ENCODE measurements at regions of chr10 and their contacts with region 1.

Region 1: GRCh38 chr10:6275022-6275997 is 72.6 kb downstream of the PFKFB3 start:
- DNase-seq: peak; percentile 98
- H3K4me3 Mint-ChIP-seq: peak overlapping the region; percentile 60
- H3K27ac Mint-ChIP-seq: peak overlapping the region; percentile 94
- H3K4me1 Mint-ChIP-seq: peaks cover 50% of the 10 kb centered on the region
- H3K27me3 Mint-ChIP-seq: no peaks in the 10 kb centered on the region

Region 2: GRCh38 chr10:5563991-5564536 is 711.2 kb before region 1 on chr10:
- CTCF ChIA-PET with region 1: no interaction called
- intact Hi-C with region 1: no loop called
- DNase-seq: peak; percentile 72
- H3K4me3 Mint-ChIP-seq: peak overlapping the region; percentile 59
- H3K27ac Mint-ChIP-seq: peak overlapping the region; percentile 79
- H3K4me1 Mint-ChIP-seq: peaks cover 40% of the 10 kb centered on the region
- H3K27me3 Mint-ChIP-seq: no peaks in the 10 kb centered on the region

Region 3: GRCh38 chr10:6163364-6164270 is 111.7 kb before region 1 on chr10:
- CTCF ChIA-PET with region 1: no interaction called
- intact Hi-C with region 1: no loop called
- DNase-seq: peak; percentile 92
- H3K4me3 Mint-ChIP-seq: peak overlapping the region; percentile 98
- H3K27ac Mint-ChIP-seq: peak overlapping the region; percentile 94
- H3K4me1 Mint-ChIP-seq: peaks cover 57% of the 10 kb centered on the region
- H3K27me3 Mint-ChIP-seq: no peaks in the 10 kb centered on the region

Region 4: DNA sequence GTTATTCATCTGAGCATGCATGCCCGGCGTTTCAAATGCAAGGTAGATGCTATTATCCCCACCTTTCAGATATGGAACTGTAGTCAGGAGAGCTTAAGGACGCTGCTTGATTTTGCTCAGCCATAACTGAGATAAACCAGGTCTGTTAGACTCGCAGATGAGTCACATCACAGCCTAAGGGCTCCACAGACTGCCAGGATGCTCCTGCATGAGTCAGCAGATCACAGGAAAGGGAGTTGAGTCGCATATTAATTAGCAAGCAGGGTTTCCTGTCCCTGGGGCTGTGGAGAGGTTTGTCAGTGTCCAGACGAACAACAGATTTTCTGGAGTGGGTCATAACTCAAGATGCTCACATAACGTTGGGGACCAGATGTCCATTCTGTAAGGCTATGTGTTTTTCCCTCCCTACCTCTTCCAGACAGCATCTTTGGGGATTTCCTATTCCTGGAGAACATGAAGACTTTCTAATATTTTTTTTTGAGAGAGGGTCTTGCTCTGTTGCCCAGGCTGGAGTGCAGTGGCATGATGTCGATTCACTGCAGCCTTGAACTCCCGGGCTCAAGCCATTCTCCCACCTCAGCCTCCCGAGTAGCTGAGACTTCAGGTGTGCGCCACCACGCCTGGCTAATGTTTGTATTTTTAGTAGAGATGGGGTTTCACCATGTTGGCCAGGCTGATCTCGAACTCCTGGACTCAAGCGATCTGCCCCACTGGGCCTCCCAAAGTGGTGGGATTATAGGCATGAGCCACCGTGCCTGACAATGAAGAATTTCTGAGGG is 35.9 kb before region 1 on chr10:
- CTCF ChIA-PET with region 1: no interaction called
- intact Hi-C with region 1: loop called (anchors 2 kb)
- DNase-seq: peak; percentile 90
- H3K4me3 Mint-ChIP-seq: no peak overlapping the region
- H3K27ac Mint-ChIP-seq: peak overlapping the region; percentile 60
- H3K4me1 Mint-ChIP-seq: peaks cover 23% of the 10 kb centered on the region
- H3K27me3 Mint-ChIP-seq: no peaks in the 10 kb centered on the region

Region 5: GRCh38 chr10:6254201-6254600 is 21.1 kb before region 1 on chr10:
- CTCF ChIA-PET with region 1: no interaction called
- intact Hi-C with region 1: no loop called
- DNase-seq: no peak
- H3K4me3 Mint-ChIP-seq: no peak overlapping the region
- H3K27ac Mint-ChIP-seq: no peak overlapping the region
- H3K4me1 Mint-ChIP-seq: peaks cover 5% of the 10 kb centered on the region
- H3K27me3 Mint-ChIP-seq: no peaks in the 10 kb centered on the region

Measured in activated naive CD4-positive, alpha-beta T cell treated with anti-CD3 and anti-CD28 coated beads for 36 hours (primary cell).